CD4-positive, alpha-beta T cell (primary cell): ENCODE measurements at regions of chr14 and their contacts with region 1.

Region 1: DNA sequence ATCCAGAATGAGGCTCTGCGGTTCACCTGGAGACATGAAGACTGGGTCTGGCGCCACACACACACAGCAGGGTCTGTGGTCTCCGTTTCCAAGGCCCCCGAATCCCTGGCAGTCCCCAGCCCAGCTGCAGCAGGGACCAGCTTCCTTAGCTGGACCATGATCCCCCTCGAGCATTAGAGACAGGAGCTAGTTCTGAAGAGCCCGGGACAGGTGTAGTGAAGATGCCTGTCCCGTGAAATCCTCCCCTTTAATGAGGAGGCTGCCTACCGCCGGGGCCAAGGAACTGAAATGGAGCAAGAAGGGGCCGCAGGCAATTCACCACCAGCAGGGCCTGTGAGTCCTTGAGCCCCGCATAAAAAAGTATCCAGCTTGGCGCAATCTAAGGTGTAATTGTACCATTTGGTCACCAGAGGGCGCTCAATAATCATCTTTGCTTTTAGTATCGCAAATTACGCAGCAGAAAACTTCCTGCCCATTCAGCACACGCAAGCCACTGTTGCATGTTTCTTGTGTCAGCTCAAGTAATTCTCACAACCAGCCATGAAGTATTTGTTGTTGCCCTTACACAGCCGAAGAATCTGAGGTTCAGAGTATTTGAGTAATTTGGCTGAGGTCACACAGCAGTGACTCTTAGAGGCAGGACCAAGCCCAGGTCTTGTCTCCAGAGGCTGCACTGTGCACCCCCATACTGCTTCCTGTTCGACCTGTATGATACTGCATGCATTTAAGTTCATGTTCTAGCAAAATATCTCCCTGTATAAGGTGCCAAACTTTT is 54.3 kb upstream of the PPP2R5C start:
- DNase-seq: peak in 13 of 14 experiments; percentile 39 to 93 (median 55)
- ATAC-seq: peak; percentile 64
- H3K4me3 ChIP-seq: peak overlapping the region; percentile 17
- H3K4me3 Mint-ChIP-seq: peak overlapping the region; percentile 30
- H3K27ac ChIP-seq: peak overlapping the region in 1 of 2 donors; percentile 62
- H3K27ac Mint-ChIP-seq: peak overlapping the region; percentile 77
- H3K4me1 ChIP-seq: peaks cover 52% of the 10 kb centered on the region
- H3K4me1 Mint-ChIP-seq: peaks cover 44% of the 10 kb centered on the region
- H3K27me3 ChIP-seq: no peaks in the 10 kb centered on the region
- H3K27me3 Mint-ChIP-seq: no peaks in the 10 kb centered on the region
- CTCF ChIP-seq: peak; percentile 87

Region 2: DNA sequence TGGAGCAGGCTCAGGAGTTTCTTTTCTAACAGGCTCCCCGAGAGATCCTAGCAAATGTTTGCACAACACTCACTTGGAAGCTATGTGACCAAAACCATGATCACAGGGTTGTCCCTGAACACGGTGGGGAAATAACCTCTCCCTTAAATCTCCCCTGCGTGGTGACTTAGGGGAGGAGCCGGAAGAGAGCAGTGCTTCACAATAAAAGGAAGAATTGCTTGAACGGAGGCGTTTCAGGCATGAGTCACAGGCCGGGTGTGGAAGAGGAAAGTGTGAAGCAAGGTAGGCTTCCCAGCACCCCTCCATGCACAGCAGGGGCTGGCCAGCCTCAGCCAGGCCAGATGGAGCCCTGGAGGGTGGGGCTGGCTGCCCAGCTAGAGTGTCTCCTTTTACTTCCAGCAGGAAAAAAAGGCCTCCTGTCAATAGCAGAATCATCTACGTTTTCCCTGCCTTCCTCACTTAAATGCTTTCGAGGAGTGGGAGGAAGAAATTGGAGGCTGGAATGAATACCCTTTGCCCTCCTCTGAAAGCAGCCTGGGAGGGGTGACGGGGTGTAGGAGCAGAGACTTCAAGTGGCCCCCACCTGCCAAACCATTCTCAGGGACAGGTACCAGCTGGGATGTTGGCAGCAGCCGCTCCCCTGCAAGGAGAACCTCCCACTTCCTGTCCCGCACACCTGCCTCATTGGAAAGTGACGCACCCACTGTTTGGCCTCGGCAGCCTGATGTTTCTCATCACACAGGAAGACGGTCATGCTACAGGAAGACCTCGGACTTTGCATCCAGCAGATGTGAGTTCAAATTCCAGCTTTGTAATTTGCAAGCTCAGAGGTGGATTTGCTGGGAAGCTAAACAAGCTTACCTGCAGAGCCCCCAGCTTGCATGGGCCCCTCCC is 24.2 kb after region 1 on chr14:
- CTCF ChIA-PET with region 1: interaction called, 20 read pairs
- POLR2A ChIA-PET with region 1: interaction called, 25 read pairs
- intact Hi-C with region 1: loop called (anchors 1 to 2 kb)
- DNase-seq: peak; percentile 53 to 94 (median 78)
- ATAC-seq: peak; percentile 90
- H3K4me3 ChIP-seq: peak overlapping the region; percentile 36
- H3K4me3 Mint-ChIP-seq: peak overlapping the region; percentile 73
- H3K27ac ChIP-seq: peak overlapping the region; percentile 87 to 88
- H3K27ac Mint-ChIP-seq: peak overlapping the region; percentile 100
- H3K4me1 ChIP-seq: peaks cover 26% of the 10 kb centered on the region
- H3K4me1 Mint-ChIP-seq: peaks cover 47% of the 10 kb centered on the region
- H3K27me3 ChIP-seq: no peaks in the 10 kb centered on the region
- H3K27me3 Mint-ChIP-seq: no peaks in the 10 kb centered on the region
- CTCF ChIP-seq: no peak

Region 3: DNA sequence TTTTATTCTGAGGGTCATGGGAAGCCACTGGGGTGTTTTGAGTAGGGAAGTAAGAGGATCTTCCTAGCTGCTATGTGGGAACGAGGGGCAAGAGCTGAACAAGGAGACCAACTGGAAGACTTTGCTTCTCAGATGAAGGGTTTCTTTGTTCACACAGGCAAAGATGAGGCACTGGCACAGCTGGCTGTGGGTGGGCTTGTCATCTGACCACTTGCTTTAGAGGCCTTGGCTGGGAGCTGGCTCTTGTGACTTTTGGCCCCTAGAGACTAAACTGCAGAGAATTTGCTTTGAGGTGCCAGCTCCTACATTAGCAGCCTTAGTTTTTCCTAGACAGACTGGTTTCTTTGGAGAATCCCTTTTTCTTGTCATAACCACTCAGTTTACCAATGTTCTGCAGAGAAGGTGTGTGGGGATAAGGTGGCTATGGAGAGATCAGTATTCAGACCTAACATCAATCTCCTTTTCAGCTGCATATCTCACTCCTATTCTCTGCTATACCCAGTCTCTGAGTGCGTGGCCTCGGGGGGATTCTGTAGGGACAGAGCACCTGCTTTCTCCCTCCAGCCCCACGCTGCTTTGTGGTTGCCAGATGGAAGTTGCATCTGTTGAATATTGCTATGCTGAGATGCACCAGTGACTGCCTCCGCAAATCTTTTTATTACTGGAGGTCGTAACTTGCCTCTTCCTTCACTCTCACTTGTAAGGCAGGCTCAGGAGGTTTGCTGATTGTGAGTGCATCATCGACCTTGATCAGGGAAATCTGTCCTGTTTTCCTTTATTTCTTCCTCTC is 66.9 kb after region 1 on chr14:
- CTCF ChIA-PET with region 1: interaction called, 72 read pairs
- POLR2A ChIA-PET with region 1: interaction called, 24 read pairs
- intact Hi-C with region 1: loop called (anchors 1 to 2 kb)
- DNase-seq: no peak
- ATAC-seq: no peak
- H3K4me3 ChIP-seq: no peak overlapping the region
- H3K4me3 Mint-ChIP-seq: no peak overlapping the region
- H3K27ac ChIP-seq: no peak overlapping the region
- H3K27ac Mint-ChIP-seq: no peak overlapping the region
- H3K4me1 ChIP-seq: peaks cover 11% of the 10 kb centered on the region
- H3K4me1 Mint-ChIP-seq: peaks cover 45% of the 10 kb centered on the region
- H3K27me3 ChIP-seq: no peaks in the 10 kb centered on the region
- H3K27me3 Mint-ChIP-seq: no peaks in the 10 kb centered on the region
- CTCF ChIP-seq: no peak

Region 4: DNA sequence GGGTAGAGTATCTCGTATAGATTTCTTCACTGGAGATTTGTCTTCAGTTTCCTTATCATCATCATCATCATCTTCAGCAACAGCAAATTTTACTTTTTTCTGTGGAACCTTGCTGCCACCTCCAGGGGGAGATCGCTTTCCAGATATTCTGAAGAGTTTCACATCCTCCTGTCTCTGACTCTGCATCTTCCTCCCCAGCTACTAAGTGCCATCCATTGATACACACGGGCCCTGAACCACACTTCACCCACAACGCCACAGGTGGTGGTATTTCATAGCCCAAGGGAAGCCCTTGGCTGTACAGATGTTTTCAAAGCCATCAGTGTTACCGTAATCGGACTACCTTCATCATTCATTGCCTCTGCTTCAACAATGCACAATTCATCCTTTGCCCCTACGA is 136.4 kb after region 1 on chr14:
- CTCF ChIA-PET with region 1: interaction called, 17 read pairs
- POLR2A ChIA-PET with region 1: interaction called, 18 read pairs
- intact Hi-C with region 1: loop called (anchors 1 to 5 kb)
- DNase-seq: peak in 12 of 14 experiments; percentile 29 to 88 (median 50)
- ATAC-seq: peak; percentile 79
- H3K4me3 ChIP-seq: no peak overlapping the region
- H3K4me3 Mint-ChIP-seq: peak overlapping the region; percentile 26
- H3K27ac ChIP-seq: peak overlapping the region in 1 of 2 donors; percentile 48
- H3K27ac Mint-ChIP-seq: peak overlapping the region; percentile 78
- H3K4me1 ChIP-seq: peaks cover 88% of the 10 kb centered on the region
- H3K4me1 Mint-ChIP-seq: peaks cover 87% of the 10 kb centered on the region
- H3K27me3 ChIP-seq: no peaks in the 10 kb centered on the region
- H3K27me3 Mint-ChIP-seq: no peaks in the 10 kb centered on the region
- CTCF ChIP-seq: peak; percentile 69

Region 5: DNA sequence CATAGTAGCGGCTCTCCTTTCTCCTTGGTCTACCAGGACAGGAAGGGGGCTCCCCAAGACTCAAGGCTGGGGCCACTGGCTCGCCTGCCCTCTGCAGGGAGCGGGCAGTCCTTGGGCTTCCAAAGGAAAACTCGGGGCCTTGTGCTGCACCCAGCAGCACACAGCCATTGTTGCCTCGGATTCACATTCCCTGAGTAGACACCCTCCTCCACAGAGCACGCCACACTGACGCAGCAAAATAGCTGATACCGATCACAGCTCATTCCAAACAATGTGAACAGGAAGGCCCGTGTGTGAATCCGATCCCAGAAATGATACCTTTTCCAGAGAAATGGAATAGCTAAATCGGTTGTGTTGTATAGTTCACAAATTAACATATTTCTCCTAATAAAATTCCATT is 192.0 kb after region 1 on chr14:
- CTCF ChIA-PET with region 1: interaction called, 4 read pairs
- POLR2A ChIA-PET with region 1: no interaction called
- intact Hi-C with region 1: loop called (anchors 5 kb)
- DNase-seq: no peak
- ATAC-seq: no peak
- H3K4me3 ChIP-seq: no peak overlapping the region
- H3K4me3 Mint-ChIP-seq: no peak overlapping the region
- H3K27ac ChIP-seq: no peak overlapping the region
- H3K27ac Mint-ChIP-seq: no peak overlapping the region
- H3K4me1 ChIP-seq: no peaks in the 10 kb centered on the region
- H3K4me1 Mint-ChIP-seq: no peaks in the 10 kb centered on the region
- H3K27me3 ChIP-seq: no peaks in the 10 kb centered on the region
- H3K27me3 Mint-ChIP-seq: no peaks in the 10 kb centered on the region
- CTCF ChIP-seq: no peak

Region 6: GRCh38 chr14:102096214-102097114 is 389.2 kb after region 1 on chr14:
- CTCF ChIA-PET with region 1: no interaction called
- POLR2A ChIA-PET with region 1: interaction called, 6 read pairs
- intact Hi-C with region 1: loop called in 1 of 2 experiments (anchors 5 kb)
- DNase-seq: peak; percentile 51 to 86 (median 66)
- ATAC-seq: peak; percentile 67
- H3K4me3 ChIP-seq: no peak overlapping the region
- H3K4me3 Mint-ChIP-seq: no peak overlapping the region
- H3K27ac ChIP-seq: no peak overlapping the region
- H3K27ac Mint-ChIP-seq: no peak overlapping the region
- H3K4me1 ChIP-seq: peaks cover 5% of the 10 kb centered on the region
- H3K4me1 Mint-ChIP-seq: no peaks in the 10 kb centered on the region
- H3K27me3 ChIP-seq: no peaks in the 10 kb centered on the region
- H3K27me3 Mint-ChIP-seq: no peaks in the 10 kb centered on the region
- CTCF ChIP-seq: peak; percentile 98

Region 7: DNA sequence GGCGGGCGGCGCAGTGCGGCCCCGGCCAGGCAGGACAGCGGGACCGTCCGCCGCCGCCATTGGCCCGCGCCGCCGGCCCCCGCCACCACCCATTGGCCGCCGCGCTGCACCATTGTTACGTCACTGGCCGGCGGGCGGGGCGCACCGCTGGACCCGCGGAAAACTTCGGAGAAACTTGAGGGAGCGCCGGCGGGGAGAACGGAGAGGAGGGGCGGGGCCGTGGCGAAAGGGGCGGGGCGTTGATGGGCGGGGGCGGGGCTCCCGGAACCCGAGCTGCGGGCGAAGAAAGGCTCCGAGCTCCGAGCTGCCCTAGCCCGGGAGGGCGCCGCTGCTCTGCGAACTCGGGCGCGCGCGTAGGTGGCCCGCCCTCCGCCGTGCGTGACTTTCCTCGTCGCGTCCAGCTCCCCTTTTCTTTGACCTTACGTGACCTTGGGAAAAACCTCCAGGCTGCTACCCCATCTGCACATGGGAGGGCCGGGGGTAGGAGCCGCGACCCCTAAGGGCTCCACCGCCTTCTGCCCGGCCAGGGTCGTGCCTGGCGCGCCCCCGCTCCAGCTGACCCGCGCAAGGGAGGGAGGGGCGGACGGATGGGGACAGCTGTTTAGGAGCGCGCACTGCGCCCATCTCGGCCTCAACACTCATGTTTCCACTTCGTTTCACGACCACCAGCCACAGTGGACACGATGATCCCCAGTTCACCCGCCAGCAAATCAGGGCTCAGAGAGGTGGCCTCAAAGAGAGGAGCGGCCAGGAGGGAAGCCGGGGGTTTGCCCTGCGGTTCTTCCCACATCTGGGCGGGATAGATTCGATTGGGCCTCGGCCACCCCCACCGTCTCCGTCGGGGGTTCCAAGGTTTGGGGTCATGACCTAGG is 802.7 kb after region 1 on chr14 and contains the start of gene ANKRD9:
- CTCF ChIA-PET with region 1: no interaction called
- POLR2A ChIA-PET with region 1: no interaction called
- intact Hi-C with region 1: loop called in 1 of 2 experiments (anchors 10 kb)
- DNase-seq: peak; percentile 59 to 95 (median 82)
- ATAC-seq: peak; percentile 81
- H3K4me3 ChIP-seq: peak within 1 kb of the TSS; percentile 74
- H3K4me3 Mint-ChIP-seq: peak within 1 kb of the TSS; percentile 92
- H3K27ac ChIP-seq: peak within 1 kb of the TSS in 1 of 2 donors; percentile 34
- H3K27ac Mint-ChIP-seq: peak within 1 kb of the TSS; percentile 62
- H3K4me1 ChIP-seq: peaks cover 25% of the 10 kb centered on the region
- H3K4me1 Mint-ChIP-seq: peaks cover 18% of the 10 kb centered on the region
- H3K27me3 ChIP-seq: no peaks in the 10 kb centered on the region
- H3K27me3 Mint-ChIP-seq: no peaks in the 10 kb centered on the region
- CTCF ChIP-seq: no peak
- total RNA-seq, gene ANKRD9: 4.4 to 5.5 TPM